Mammary epithelial cell (primary cell): ENCODE measurements at regions of chr11 and their contacts with region 1.

Region 1: DNA sequence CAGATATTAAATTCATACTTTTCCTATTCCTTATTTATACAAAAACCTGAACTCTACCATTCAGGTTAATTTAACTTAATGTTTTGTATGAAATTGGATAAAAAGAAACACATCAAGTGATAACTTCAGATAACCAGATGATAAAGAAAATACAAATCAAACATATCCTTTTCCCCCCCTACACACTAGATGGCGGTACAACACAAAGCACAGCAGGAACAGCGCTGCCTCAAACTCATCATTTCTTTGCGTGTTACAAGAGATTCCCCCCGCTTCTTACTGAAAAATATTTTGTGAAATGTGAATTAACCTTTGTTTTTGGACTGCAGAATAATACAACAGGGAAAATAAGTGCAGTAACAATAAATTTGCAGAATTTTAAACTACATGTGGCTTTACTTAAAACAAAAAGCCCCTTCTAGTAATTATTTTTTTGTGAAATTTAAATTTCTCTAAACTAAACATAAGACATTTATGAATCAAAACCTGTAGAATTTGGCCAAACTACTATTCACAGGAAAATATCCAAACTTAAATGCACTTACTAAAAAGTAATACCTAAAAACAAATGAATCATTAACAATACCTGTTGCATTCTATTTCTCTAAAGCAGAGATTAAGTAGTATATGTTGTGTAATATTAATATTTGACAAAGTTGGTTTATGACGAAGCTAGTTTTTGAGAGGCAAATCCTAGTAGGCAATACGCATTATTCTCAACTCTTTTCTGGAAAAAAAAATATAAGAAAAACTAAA is 74.4 kb downstream of the ARHGAP32 start:
- DNase-seq: peak; percentile 42
- H3K4me3 ChIP-seq: no peak overlapping the region
- H3K27ac ChIP-seq: no peak overlapping the region
- H3K4me1 ChIP-seq: peaks cover 10% of the 10 kb centered on the region
- H3K27me3 ChIP-seq: no peaks in the 10 kb centered on the region
- CTCF ChIP-seq: peak; percentile 93 to 94

Region 2: DNA sequence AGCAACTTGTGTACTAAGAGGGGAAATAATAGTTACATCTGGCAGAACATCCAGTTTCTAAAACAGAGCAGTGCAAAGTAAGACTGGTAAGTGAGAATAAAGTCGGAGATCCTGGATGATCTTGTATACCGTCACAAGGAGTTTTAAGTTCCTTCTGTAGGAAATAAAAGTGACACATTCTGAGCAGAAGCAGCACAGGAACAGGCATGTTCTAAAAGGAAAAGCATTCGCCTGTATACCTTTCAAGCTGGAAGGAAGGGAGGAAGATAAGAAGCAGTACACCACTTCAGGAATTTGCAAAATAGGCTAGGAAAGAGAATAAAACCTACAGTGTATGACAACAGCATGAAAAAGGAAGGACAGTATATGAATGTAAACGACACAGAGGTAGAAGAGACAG is 68.9 kb before region 1 on chr11:
- CTCF ChIA-PET with region 1: no interaction called
- dilution Hi-C with region 1: no loop called
- in situ Hi-C with region 1: no loop called
- intact Hi-C with region 1: no loop called
- DNase-seq: peak; percentile 8
- H3K4me3 ChIP-seq: no peak overlapping the region
- H3K27ac ChIP-seq: no peak overlapping the region
- H3K4me1 ChIP-seq: no peaks in the 10 kb centered on the region
- H3K27me3 ChIP-seq: no peaks in the 10 kb centered on the region
- CTCF ChIP-seq: no peak

Region 3: GRCh38 chr11:129251067-129251466 is 133.3 kb after region 1 on chr11:
- CTCF ChIA-PET with region 1: no interaction called
- dilution Hi-C with region 1: no loop called
- in situ Hi-C with region 1: no loop called
- intact Hi-C with region 1: no loop called
- DNase-seq: no peak
- H3K4me3 ChIP-seq: no peak overlapping the region
- H3K27ac ChIP-seq: no peak overlapping the region
- H3K4me1 ChIP-seq: peaks cover 27% of the 10 kb centered on the region
- H3K27me3 ChIP-seq: no peaks in the 10 kb centered on the region
- CTCF ChIP-seq: no peak

Region 4: GRCh38 chr11:129364143-129364654 is 246.4 kb after region 1 on chr11:
- CTCF ChIA-PET with region 1: no interaction called
- dilution Hi-C with region 1: no loop called
- in situ Hi-C with region 1: no loop called
- intact Hi-C with region 1: loop called (anchors 1 kb)
- DNase-seq: peak; percentile 82
- H3K4me3 ChIP-seq: no peak overlapping the region
- H3K27ac ChIP-seq: no peak overlapping the region
- H3K4me1 ChIP-seq: peaks cover 4% of the 10 kb centered on the region
- H3K27me3 ChIP-seq: peaks cover 21% of the 10 kb centered on the region
- CTCF ChIP-seq: peak; percentile 100

Region 5: DNA sequence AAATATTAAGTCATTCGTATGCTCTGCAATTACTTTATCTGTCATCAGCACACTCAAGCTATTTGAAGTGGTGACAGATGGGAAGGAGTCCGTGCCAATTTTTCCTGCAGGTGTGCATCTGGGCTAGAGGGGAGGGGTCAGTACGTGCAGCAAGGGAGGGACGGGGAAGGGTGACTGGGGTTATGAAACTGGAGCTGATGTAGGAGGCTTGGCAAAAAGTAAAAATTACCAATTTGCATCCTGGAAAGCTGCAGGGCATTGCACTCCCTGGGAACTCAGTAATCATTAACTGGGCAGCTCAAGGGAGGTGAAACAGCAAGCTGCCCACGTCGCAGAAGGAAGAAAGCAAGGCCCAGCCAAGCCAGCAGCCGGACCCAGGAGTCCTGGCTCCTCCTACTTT is 610.8 kb after region 1 on chr11:
- CTCF ChIA-PET with region 1: no interaction called
- dilution Hi-C with region 1: no loop called
- in situ Hi-C with region 1: loop called in 1 of 2 experiments (anchors 25 kb)
- intact Hi-C with region 1: no loop called
- DNase-seq: no peak
- H3K4me3 ChIP-seq: no peak overlapping the region
- H3K27ac ChIP-seq: no peak overlapping the region
- H3K4me1 ChIP-seq: peaks cover 17% of the 10 kb centered on the region
- H3K27me3 ChIP-seq: no peaks in the 10 kb centered on the region
- CTCF ChIP-seq: no peak